Activated CD4-positive, alpha-beta memory T cell treated with anti-CD3 and anti-CD28 coated beads, Interleukin-2, amount 10 ng/mL, durations not matched to agents 7 days and 5 days (primary cell): ENCODE measurements at regions of chr6 and their contacts with region 1.

Region 1: DNA sequence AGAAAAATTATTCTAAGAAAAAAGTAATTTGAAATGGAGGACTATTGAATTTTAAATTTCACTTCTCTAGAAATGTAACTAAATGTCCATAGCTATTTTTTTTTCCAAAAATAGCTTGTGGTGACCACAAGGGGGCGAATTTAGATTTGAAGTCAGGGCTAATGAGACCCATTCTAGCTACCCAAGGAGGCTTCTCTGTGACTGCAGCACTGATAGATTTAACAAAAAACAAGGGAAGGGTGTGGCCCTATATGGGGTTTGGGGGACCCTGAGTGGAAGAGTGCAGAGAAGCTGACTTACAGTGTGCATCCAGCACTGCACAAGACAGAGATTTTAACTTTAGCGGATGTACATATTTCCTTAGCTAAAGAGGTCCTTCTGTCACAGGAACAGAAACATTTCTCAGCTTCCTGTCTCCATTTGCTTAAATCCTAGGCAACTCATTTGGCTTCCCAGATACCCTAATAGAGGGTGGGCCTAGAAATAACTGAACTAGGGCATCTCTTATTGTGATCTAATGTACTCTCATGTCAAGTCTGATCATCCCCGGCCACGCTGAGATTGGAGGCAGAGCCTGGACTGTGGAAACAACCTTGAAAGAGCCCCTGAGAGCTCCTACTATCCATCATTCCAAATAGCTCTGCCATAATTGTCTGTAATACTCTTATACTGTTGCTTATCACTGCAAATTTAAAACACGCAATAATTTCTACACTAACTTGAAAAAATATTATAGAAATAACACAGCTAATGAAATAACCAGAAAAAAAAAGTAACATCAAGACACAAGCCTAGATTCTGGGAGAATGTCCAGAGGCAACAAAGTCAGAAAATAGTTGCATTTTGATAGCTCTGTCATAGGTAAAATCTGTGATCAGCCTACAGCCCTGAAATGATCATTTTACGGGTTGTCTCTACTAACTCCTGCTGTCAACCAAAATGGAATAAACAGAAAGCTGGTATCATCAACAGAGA is 93.6 kb downstream of the SNAP91 start:
- DNase-seq: no peak
- H3K4me3 Mint-ChIP-seq: no peak overlapping the region
- H3K27ac Mint-ChIP-seq: no peak overlapping the region
- H3K4me1 Mint-ChIP-seq: no peaks in the 10 kb centered on the region
- H3K27me3 Mint-ChIP-seq: no peaks in the 10 kb centered on the region

Region 2: DNA sequence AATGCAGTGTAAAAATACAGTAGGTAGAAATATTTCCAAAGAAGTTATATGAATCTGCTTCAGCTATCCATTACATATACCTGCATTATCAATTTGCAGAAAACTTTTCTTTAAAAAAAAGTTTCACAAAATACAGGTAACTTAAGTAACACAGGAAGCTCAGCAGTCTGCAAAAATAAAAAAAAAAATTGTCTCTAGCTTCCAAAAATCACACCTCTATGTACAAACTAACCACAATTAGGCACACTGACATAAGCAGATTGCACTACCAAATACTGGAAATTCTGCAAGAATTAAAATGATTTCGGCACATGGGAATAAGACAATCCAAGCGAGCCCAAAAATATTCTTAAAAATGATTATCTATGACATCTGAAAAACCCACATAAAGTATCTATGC is 225.7 kb before region 1 on chr6:
- CTCF ChIA-PET with region 1: no interaction called
- POLR2A ChIA-PET with region 1: no interaction called
- DNase-seq: no peak
- H3K4me3 Mint-ChIP-seq: no peak overlapping the region
- H3K27ac Mint-ChIP-seq: no peak overlapping the region
- H3K4me1 Mint-ChIP-seq: no peaks in the 10 kb centered on the region
- H3K27me3 Mint-ChIP-seq: no peaks in the 10 kb centered on the region

Region 3: DNA sequence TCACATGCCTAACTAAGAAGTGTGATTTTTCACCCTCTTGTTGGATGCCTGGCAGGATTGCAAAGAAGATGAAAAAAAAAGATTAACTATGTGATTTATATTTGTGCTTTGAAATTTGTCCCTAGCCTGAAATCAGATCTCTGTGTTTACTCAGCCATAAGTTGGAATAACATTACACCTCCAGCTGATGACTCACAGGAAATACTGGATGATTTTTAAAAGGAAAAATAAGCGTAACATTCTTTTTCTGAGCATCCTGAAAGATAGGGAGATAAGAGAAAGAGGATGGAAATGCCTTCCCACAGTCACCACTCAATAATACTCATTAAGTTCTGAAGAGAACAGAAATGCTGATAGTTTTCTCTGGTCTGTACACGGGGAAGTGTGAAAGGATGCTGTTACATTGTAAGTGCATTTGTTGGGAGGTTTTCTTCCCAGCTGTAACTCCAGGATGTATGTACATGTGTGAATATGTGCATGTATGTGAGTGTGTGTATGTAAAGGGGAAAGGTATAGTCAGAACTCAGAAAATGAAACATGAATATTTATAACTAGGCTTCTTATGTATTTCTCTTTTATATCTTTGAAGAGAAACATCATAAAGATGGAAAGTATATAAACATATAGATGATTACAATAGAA is 200.4 kb after region 1 on chr6:
- CTCF ChIA-PET with region 1: no interaction called
- POLR2A ChIA-PET with region 1: no interaction called
- DNase-seq: no peak
- H3K4me3 Mint-ChIP-seq: no peak overlapping the region
- H3K27ac Mint-ChIP-seq: no peak overlapping the region
- H3K4me1 Mint-ChIP-seq: no peaks in the 10 kb centered on the region
- H3K27me3 Mint-ChIP-seq: no peaks in the 10 kb centered on the region

Region 4: GRCh38 chr6:84220809-84221409 is 605.6 kb after region 1 on chr6:
- CTCF ChIA-PET with region 1: interaction called, 10 read pairs
- POLR2A ChIA-PET with region 1: no interaction called
- DNase-seq: no peak
- H3K4me3 Mint-ChIP-seq: no peak overlapping the region
- H3K27ac Mint-ChIP-seq: no peak overlapping the region
- H3K4me1 Mint-ChIP-seq: peaks cover 8% of the 10 kb centered on the region
- H3K27me3 Mint-ChIP-seq: no peaks in the 10 kb centered on the region